A673 (cell line): ENCODE measurements at regions of chr9 and their contacts with region 1.

Region 1: GRCh38 chr9:12554636-12555035 is 138.5 kb upstream of the TYRP1 start:
- DNase-seq: peak; percentile 58
- H3K4me3 ChIP-seq: no peak overlapping the region
- H3K27ac ChIP-seq: no peak overlapping the region
- H3K4me1 ChIP-seq: no peaks in the 10 kb centered on the region
- H3K27me3 ChIP-seq: no peaks in the 10 kb centered on the region
- CTCF ChIP-seq: peak; percentile 57

Region 2: GRCh38 chr9:12640016-12640587 is 85.5 kb after region 1 on chr9:
- CTCF ChIA-PET with region 1: interaction called, 7 read pairs
- POLR2A ChIA-PET with region 1: no interaction called
- intact Hi-C with region 1: loop called (anchors 2 kb)
- DNase-seq: peak; percentile 76
- H3K4me3 ChIP-seq: no peak overlapping the region
- H3K27ac ChIP-seq: no peak overlapping the region
- H3K4me1 ChIP-seq: no peaks in the 10 kb centered on the region
- H3K27me3 ChIP-seq: no peaks in the 10 kb centered on the region
- CTCF ChIP-seq: peak; percentile 69

Region 3: DNA sequence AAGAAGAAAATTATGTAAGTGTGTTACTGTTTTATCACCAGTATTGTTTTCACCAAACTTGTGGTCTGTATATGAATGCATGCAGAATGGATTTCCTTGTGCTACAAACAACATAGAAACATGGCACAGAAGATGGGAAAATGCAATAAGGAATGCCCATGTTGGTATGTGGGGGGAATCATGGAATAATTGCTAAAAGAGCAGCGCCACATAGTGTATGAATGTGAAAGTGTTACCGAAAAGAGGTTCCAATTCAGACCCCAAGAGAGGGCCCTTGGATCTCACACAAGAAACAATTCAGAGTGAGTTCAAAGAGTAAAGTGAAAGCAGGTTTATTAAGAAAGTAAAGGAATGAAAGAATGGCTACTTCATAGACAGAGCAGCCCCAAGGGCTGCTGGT is 112.2 kb after region 1 on chr9:
- CTCF ChIA-PET with region 1: no interaction called
- POLR2A ChIA-PET with region 1: no interaction called
- intact Hi-C with region 1: loop called (anchors 5 kb)
- DNase-seq: peak; percentile 49
- H3K4me3 ChIP-seq: no peak overlapping the region
- H3K27ac ChIP-seq: no peak overlapping the region
- H3K4me1 ChIP-seq: no peaks in the 10 kb centered on the region
- H3K27me3 ChIP-seq: no peaks in the 10 kb centered on the region
- CTCF ChIP-seq: peak; percentile 61

Region 4: GRCh38 chr9:12771891-12772290 is 217.3 kb after region 1 on chr9:
- CTCF ChIA-PET with region 1: no interaction called
- POLR2A ChIA-PET with region 1: no interaction called
- intact Hi-C with region 1: no loop called
- DNase-seq: no peak
- H3K4me3 ChIP-seq: no peak overlapping the region
- H3K27ac ChIP-seq: no peak overlapping the region
- H3K4me1 ChIP-seq: peaks cover 5% of the 10 kb centered on the region
- H3K27me3 ChIP-seq: peaks cover 6% of the 10 kb centered on the region
- CTCF ChIP-seq: no peak